AG04450 (cell line): ENCODE measurements at regions of chr15 and their contacts with region 1.

Region 1: DNA sequence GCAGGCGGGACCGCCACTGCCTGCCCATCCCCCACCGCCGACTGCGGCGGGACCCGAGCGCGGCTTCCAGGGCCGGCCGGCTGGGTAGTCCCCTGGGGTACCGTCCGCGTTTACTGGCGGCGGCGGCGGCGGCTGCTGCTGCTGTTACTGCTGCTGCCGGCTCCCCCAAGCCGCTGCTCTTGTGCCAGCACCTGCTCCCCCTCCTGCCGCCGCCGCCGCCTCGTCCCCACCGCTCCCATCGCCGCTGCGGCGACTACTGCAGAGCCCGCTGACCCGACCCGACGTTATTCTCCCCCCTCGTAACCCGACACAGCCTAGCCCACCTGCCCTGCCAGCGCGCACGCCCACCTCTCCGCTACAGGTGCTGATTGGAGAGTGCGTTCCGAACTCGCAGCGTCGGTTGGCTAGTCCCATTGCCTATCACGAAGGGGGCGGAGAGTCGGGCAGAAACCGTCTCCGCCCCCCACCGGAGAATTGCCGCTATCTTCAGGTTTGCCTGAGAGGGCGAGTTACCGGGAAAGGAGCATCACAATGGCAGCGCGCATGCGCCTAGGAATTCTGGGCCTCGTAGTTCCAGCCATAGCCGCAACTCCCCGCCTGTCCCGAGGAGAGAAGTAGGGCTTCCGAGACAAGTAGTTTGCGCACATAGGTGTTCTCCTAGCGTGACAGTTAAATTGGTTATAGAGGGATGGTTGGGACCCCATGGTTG is at the start of gene TTBK2:
- DNase-seq: peak; percentile 98
- H3K4me3 ChIP-seq: peak within 1 kb of the TSS; percentile 76
- H3K27ac ChIP-seq: peak within 1 kb of the TSS; percentile 42
- H3K27me3 ChIP-seq: no peaks in the 10 kb centered on the region
- CTCF ChIP-seq: peak; percentile 14; the same call in 1 of the 2 replicates
- polyA plus RNA-seq, gene TTBK2: 6.0 and 8.2 TPM in 2 replicates

Region 2: DNA sequence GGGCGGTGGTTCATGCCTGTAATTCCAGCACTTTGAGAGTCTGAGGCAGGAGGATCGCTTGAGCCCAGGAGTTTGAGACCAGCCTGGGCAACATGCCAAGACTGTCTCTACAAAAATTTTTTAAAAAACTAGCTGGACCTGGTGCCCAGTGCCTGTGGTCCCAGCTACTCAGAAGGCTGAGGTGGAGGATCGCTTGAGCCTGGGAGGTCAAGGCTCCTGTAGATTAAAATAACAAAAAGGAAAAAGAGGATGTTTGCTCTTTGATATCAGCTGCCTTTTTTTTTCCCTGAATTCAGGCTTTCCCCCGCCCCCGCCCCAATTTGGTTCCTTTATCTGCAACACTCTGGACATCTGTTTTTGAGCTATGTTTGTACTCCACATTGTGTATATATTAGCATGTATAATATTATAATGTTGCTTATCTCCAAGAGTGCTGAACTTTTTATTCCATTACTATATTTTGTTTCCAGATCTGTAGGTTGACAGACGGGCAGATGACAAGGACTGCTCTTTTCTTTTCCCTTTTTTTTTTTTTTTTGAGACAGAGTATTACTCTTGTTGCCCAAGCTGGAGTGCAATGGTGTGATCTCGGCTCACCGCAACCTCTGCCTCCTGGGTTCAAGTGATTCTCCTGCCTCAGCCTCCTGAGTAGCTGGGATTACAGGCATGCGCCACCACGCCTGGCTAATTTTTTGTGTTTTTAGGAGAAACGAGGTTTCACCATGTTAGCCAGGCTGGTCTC is 420.6 kb before region 1 on chr15:
- CTCF ChIA-PET with region 1: no interaction called
- POLR2A ChIA-PET with region 1: no interaction called
- DNase-seq: no peak
- H3K4me3 ChIP-seq: no peak overlapping the region
- H3K27ac ChIP-seq: peak overlapping the region; percentile 61
- H3K27me3 ChIP-seq: no peaks in the 10 kb centered on the region
- CTCF ChIP-seq: no peak

Region 3: DNA sequence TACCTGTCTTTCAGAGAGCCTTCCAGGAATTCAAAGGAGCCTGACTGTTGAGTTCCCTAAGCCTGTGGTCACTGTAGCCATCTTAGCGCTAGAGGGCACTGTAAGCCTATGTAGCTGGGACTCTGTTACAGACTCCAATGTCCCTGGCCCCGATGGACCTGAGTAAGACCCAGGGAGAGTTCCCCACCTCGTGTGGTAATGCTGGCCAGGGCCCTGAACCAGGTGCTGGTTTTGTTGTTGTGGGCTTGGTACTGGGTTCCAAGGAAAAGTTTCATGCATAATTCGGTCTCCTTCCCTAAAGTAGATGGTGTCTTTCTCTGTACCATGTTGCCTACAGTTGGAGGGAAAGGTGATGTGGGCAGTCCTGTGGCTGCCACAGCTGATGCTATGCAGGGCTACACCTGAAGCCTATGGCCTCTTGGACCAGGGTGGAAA is 216.2 kb before region 1 on chr15:
- CTCF ChIA-PET with region 1: interaction called, 14 read pairs
- POLR2A ChIA-PET with region 1: no interaction called
- DNase-seq: peak; percentile 23
- H3K4me3 ChIP-seq: no peak overlapping the region
- H3K27ac ChIP-seq: no peak overlapping the region
- H3K27me3 ChIP-seq: no peaks in the 10 kb centered on the region
- CTCF ChIP-seq: peak; percentile 97

Region 4: DNA sequence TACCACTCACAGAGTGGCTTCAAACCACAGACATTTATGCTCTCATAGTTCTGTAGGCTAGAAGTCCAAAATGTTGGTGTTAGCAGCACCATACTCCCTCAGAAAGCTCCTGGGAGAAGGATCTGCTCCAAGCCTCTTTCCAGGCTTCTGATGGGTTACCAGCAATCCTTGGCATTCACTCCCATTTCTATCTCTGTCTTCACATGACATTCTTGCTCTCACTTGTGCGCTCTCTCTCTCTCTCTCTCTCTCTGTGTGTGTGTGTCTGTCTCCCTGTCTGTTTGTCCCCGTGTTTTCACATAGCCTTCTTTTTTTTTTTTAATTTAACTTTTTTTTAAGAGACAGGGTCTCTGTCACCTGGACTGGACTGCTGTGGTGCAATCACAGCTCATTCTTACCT is 210.0 kb before region 1 on chr15:
- CTCF ChIA-PET with region 1: interaction called, 14 read pairs
- POLR2A ChIA-PET with region 1: no interaction called
- DNase-seq: no peak
- H3K4me3 ChIP-seq: no peak overlapping the region
- H3K27ac ChIP-seq: no peak overlapping the region
- H3K27me3 ChIP-seq: no peaks in the 10 kb centered on the region
- CTCF ChIP-seq: no peak

Region 5: GRCh38 chr15:42736793-42737528 is 183.7 kb before region 1 on chr15 and contains the start of gene CDAN1:
- CTCF ChIA-PET with region 1: interaction called, 24 read pairs
- POLR2A ChIA-PET with region 1: interaction called, 4 read pairs
- DNase-seq: peak; percentile 44
- H3K4me3 ChIP-seq: peak within 1 kb of the TSS; percentile 93
- H3K27ac ChIP-seq: peak within 1 kb of the TSS; percentile 87
- H3K27me3 ChIP-seq: no peaks in the 10 kb centered on the region
- CTCF ChIP-seq: no peak
- polyA plus RNA-seq, gene CDAN1: 3.9 and 4.4 TPM in 2 replicates

Region 6: GRCh38 chr15:42800731-42801474 is 119.8 kb before region 1 on chr15:
- CTCF ChIA-PET with region 1: interaction called, 13 read pairs
- POLR2A ChIA-PET with region 1: no interaction called
- DNase-seq: no peak
- H3K4me3 ChIP-seq: no peak overlapping the region
- H3K27ac ChIP-seq: no peak overlapping the region
- H3K27me3 ChIP-seq: no peaks in the 10 kb centered on the region
- CTCF ChIP-seq: no peak

Region 7: GRCh38 chr15:42955518-42955917 is 34.8 kb after region 1 on chr15:
- CTCF ChIA-PET with region 1: no interaction called
- POLR2A ChIA-PET with region 1: no interaction called
- DNase-seq: peak; percentile 6
- H3K4me3 ChIP-seq: no peak overlapping the region
- H3K27ac ChIP-seq: no peak overlapping the region
- H3K27me3 ChIP-seq: no peaks in the 10 kb centered on the region
- CTCF ChIP-seq: no peak

Region 8: GRCh38 chr15:43105778-43106485 is 185.3 kb after region 1 on chr15 and contains the start of gene UBR1:
- CTCF ChIA-PET with region 1: no interaction called
- POLR2A ChIA-PET with region 1: no interaction called
- DNase-seq: peak; percentile 71
- H3K4me3 ChIP-seq: peak within 1 kb of the TSS; percentile 95
- H3K27ac ChIP-seq: peak within 1 kb of the TSS; percentile 47
- H3K27me3 ChIP-seq: no peaks in the 10 kb centered on the region
- CTCF ChIP-seq: no peak
- polyA plus RNA-seq, gene UBR1: 13.4 and 18.4 TPM in 2 replicates